ENCODE measurements at regions of chr9 and their contacts with region 1.

Region 1: DNA sequence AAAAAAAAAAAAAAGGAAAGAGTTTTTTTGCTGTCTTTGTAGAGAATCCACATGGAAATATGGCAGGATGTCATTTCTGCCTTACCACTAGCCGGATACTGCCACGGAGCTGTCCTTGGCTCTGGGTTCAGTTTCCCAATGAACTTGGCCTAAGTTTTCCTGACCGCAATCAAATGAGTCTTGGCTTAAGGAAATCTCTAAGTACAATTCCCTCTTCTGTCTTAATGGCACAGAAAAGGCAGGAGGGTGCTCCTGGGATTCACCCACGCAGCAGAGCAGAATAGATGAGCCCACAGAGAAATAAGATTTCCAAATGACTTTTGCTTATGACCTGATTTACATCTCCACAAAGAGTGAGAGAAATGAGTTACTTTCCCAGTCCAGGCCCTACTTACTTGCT is 284.0 kb upstream of the VLDLR start:
- DNase-seq: no peak
- ATAC-seq: no peak
- H3K4me3 ChIP-seq: no peak overlapping the region
- H3K27ac ChIP-seq: no peak overlapping the region
- H3K4me1 ChIP-seq: no peaks in the 10 kb centered on the region
- H3K27me3 ChIP-seq: no peaks in the 10 kb centered on the region
- CTCF ChIP-seq: no peak

Region 2: DNA sequence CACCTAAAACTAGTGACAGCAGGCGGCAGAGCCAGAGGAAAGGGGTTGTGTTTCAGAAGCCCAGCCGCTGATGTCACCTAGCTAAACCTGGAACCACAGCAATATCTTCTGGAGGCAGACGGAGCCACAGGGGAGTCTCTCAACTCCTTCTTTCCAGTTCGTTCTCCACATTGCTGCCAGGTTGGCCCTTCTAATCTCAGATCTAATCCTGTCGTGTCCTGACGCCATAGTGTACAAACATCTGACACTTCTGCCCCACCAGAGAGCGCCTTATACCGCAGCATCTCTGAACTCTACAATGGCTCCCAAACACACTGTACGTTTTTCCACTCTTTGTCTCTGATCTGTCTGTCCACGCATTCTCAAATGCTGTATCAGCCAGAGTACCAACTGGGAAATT is 82.5 kb before region 1 on chr9:
- CTCF ChIA-PET with region 1: no interaction called
- POLR2A ChIA-PET with region 1: interaction called, 10 read pairs
- in situ Hi-C with region 1: no loop called
- intact Hi-C with region 1: no loop called
- DNase-seq: no peak
- ATAC-seq: no peak
- H3K4me3 ChIP-seq: no peak overlapping the region
- H3K27ac ChIP-seq: no peak overlapping the region
- H3K4me1 ChIP-seq: no peaks in the 10 kb centered on the region
- H3K27me3 ChIP-seq: no peaks in the 10 kb centered on the region
- CTCF ChIP-seq: no peak

Region 3: GRCh38 chr9:2359821-2360505 is 22.3 kb after region 1 on chr9:
- CTCF ChIA-PET with region 1: no interaction called
- POLR2A ChIA-PET with region 1: no interaction called
- in situ Hi-C with region 1: no loop called
- intact Hi-C with region 1: no loop called
- DNase-seq: no peak
- ATAC-seq: no peak
- H3K4me3 ChIP-seq: no peak overlapping the region
- H3K27ac ChIP-seq: no peak overlapping the region
- H3K4me1 ChIP-seq: no peaks in the 10 kb centered on the region
- H3K27me3 ChIP-seq: no peaks in the 10 kb centered on the region
- CTCF ChIP-seq: no peak

Region 4: DNA sequence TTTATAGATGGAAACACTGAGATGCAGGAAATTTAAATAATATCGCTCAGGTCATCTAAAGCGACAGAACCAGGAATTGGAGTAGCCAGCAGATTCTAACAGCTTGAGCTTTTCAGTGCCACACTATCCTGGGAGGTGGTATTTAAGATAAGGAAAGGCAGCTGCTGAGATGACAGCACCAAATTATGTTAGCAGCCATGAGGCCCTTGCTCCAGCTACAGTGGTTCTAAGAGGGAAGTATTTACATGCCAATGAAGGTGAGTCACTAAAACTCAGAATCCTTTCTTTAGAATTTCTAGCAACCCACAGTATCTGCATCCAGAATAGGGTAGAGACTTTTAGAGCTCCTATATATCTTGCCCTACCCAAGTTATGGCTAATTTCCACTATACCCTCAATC is 156.9 kb after region 1 on chr9:
- CTCF ChIA-PET with region 1: no interaction called
- POLR2A ChIA-PET with region 1: no interaction called
- in situ Hi-C with region 1: no loop called
- intact Hi-C with region 1: no loop called
- DNase-seq: no peak
- ATAC-seq: no peak
- H3K4me3 ChIP-seq: no peak overlapping the region
- H3K27ac ChIP-seq: no peak overlapping the region
- H3K4me1 ChIP-seq: no peaks in the 10 kb centered on the region
- H3K27me3 ChIP-seq: no peaks in the 10 kb centered on the region
- CTCF ChIP-seq: no peak